Tibial artery (tissue), 4 donors: ENCODE measurements at regions of chr12 and their contacts with region 1.

Region 1: GRCh38 chr12:70733385-70733784 is 96.2 kb upstream of the PTPRB start:
- DNase-seq: no peak
- H3K4me3 ChIP-seq: no peak overlapping the region
- H3K27ac ChIP-seq: no peak overlapping the region
- H3K4me1 ChIP-seq: no peaks in the 10 kb centered on the region
- H3K27me3 ChIP-seq: no peaks in the 10 kb centered on the region
- CTCF ChIP-seq: peak; percentile 51 to 62

Region 2: DNA sequence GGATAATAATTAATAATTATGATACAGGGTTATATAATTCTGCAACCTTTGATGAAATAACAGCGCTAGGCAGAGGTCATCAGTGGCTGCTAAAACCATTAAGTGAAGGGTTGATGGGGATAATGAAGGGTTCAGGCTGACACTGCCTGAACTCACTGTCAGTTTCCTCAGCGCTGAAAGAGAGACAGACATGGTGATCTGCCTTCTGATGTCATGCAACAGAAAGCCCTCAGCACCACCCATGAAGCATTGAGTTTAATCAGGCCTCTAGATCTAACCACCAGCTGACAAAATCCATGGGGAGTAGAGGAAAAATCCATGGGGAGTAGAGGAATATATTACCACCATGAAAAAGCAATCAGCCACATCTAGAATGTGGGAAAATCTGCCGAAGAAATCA is 203.7 kb before region 1 on chr12:
- intact Hi-C with region 1: no loop called
- DNase-seq: no peak
- H3K4me3 ChIP-seq: no peak overlapping the region
- H3K27ac ChIP-seq: no peak overlapping the region
- H3K4me1 ChIP-seq: no peaks in the 10 kb centered on the region
- H3K27me3 ChIP-seq: no peaks in the 10 kb centered on the region
- CTCF ChIP-seq: no peak

Region 3: GRCh38 chr12:70686299-70686698 is 47.1 kb before region 1 on chr12:
- intact Hi-C with region 1: no loop called
- DNase-seq: no peak
- H3K4me3 ChIP-seq: no peak overlapping the region
- H3K27ac ChIP-seq: no peak overlapping the region
- H3K4me1 ChIP-seq: no peaks in the 10 kb centered on the region
- H3K27me3 ChIP-seq: no peaks in the 10 kb centered on the region
- CTCF ChIP-seq: no peak

Region 4: DNA sequence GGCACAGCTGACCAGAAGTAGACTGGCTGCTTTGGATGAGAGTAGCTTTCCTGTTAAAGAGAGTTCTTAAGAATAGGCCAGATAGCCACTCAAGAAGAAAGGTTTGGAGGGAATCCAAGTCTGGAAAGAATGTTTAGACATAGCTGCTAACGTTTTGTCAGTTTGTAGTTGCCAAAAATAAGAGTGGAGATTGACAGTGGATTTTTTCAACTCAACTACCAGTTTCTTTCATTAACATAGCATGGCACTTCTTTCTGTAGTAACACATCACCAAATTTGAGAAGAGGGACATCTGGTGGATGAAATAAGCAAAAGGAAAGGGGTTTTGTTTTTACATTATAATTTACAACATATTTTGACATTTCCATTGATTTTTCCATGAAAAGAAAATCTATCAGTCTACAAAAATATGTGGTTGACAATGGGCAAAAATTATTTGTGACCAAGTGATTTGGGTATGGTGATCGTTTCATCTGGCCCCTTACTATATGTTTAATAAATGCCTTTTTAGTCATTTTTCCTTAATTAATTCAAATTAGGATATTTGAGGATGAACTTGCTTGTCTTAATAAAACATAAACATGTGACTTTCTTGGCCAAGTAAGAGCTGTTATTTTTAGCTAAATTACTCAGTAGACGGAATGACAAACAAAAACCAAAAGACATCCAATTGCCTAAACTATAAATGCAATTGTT is 116.0 kb after region 1 on chr12:
- intact Hi-C with region 1: loop called (anchors 10 kb)
- DNase-seq: no peak
- H3K4me3 ChIP-seq: no peak overlapping the region
- H3K27ac ChIP-seq: no peak overlapping the region
- H3K4me1 ChIP-seq: peaks cover 0 to 33% (median 12%) of the 10 kb centered on the region in 4 donors
- H3K27me3 ChIP-seq: no peaks in the 10 kb centered on the region
- CTCF ChIP-seq: peak; percentile 36 to 48